Right ventricle myocardium superior (tissue), 1 donor: ENCODE measurements at regions of chr6 and their contacts with region 1.

Region 1: DNA sequence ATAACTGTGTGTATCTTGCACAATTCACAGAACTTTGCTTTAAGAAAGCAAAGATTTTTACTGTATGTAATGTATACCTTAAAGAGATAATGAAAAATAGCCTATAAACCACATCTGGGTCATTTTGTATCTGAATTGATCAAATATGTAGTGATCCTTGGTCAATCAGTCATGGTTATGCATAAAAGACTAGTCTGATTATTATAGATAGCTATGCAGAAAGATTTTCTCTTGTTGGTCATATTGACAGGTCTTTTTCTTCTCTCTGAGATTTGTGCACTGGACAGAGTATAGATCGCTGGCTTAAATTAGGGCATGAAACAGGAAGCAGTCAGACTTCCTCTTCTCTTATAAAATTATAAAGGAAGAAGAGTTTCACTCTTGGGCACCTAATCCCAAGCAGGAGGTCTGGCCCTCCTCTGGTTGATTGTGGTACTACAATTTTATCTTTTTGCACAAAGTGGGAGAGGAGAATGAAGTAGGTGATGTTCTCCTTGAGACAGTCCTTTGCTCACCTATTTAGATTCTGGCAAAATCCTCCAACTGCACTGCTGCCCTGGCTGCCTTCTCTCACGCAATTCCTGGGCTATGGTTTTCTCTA is 380.9 kb upstream of the RGS17 start:
- DNase-seq: no peak
- ATAC-seq: peak; percentile 48

Region 2: DNA sequence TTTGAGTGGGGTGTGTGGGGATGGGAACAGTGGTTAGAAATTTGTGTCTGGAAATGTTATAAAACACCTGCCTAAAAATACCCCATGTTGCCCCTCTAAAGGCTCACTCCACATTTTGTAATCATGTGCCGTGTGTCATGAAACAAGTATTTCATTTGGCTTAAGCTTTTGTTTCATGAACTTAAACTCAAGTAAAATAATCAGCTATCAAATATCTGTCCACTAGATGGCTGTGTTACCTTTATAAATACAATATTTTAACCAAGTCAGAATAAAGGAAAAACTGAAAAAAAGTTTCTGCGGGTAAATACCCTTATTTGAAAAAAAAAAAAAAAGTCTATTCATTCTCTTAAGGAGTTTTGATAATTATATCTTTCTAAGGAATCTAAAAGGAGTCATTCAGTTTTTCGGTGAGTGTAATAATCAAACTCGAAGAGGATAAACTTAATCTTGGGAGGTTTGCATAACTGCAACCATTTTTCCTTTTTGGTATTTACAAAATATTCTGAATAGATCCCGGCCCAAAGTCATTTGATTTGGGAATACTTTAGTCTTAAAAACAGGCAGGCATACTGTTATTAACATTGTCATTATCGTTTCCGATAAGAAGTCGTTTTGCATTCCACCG is 479.6 kb before region 1 on chr6:
- intact Hi-C with region 1: loop called (anchors 5 kb)
- DNase-seq: no peak
- ATAC-seq: no peak

Region 3: GRCh38 chr6:154001494-154002285 is 489.7 kb after region 1 on chr6:
- intact Hi-C with region 1: no loop called
- DNase-seq: no peak
- ATAC-seq: no peak